IMR-90 (cell line): ENCODE measurements at regions of chr3 and their contacts with region 1.

Region 1: DNA sequence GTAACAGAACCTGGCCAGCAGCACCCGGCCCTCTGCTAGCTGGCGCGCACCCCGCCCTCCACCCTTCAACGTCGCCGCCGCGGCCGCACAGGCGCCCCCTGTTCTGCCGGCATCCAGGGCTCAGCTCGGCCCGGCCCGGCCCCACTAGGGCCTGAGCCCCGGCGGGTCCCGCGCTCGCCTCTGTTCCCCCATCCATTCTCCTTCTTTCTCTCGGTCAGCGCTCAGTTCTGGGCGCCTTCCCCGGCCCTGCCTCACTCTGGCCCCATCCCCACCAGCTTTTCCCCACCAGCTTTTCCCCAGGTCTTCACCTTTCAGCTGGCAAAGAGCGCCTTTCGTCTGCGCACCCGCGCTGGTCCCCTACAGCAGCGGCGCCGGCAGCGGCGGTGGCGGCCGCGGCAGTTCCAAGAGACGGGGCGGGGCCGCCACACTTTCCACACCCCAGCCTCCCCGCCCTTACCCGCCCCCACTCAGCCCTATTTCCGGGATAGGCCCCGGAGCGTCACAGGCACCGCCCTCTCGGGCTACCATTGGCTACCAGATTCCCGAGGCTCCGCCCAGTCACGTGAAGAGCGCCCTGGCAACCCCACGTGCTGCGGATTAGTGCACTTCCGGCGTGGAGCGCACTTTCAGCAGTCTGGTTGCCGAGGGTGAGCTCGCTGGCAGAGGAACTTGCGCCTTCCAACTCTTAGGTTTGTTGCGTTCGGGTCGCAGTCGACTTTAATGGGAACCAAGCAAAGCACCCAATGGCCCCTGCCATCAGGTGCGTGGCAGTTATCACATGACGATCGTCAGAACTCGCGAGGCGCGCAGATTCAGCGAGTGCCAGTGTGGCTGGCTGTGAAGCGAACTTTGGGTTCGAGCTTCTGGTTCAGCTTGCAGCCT is at the start of gene EIF5A2:
- DNase-seq: peak; percentile 93
- ATAC-seq: peak; percentile 96
- H3K4me3 ChIP-seq: peak within 1 kb of the TSS; percentile 80
- H3K27ac ChIP-seq: peak within 1 kb of the TSS; percentile 91
- H3K4me1 ChIP-seq: peaks cover 7% of the 10 kb centered on the region
- H3K27me3 ChIP-seq: no peaks in the 10 kb centered on the region
- CTCF ChIP-seq: no peak
- POLR2A ChIP-seq: peak; percentile 88
- RAD21 ChIP-seq: no peak
- total RNA-seq, gene EIF5A2: 7.7 and 15.0 TPM in 2 replicates

Region 2: DNA sequence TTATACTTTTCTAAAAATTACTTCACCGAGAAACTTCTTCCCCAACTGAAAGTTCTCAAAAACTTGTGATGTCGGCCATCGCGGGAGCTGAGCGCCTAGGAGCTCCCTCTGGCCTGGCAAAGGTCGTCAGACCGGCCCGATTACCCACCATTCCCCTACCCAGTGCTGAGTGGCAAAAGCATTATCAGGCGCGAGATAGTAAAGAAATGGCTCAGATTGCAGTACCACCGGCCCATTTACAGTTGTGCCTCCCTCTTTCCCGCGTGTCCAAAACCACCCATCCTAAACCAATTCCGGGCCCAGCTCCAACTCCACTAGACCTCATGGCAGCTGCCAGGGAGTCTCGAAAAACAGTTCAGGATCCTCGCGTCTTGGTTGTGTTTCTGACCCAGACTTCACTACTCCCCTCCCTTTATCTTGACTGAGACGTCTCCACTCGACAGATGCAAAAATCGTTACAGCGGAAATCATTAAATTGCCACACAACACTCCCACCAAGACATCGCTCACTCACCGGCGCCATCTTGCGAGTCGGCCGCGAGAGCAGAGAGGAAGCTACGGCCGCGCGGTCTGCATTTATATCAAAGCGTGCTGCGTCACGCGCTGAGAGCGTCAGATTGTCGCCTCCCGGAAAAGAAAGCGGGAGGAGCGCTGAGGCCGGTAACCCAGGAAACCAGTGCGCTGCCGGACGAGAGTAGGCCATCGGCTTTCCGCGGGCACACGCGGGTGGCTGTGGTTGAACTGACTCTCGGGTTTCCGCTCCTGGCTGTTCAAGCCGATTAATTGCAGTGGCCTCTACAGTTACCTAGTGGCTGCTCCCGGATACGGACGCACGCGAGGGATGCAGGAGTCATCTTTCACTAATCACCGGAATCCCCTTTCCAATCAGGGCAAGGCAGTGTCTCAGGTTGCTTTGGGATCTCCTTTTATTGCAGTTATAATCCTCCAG is 38.6 kb before region 1 on chr3 and contains the start of gene RPL22L1:
- CTCF ChIA-PET with region 1: no interaction called
- POLR2A ChIA-PET with region 1: no interaction called
- dilution Hi-C with region 1: no loop called
- in situ Hi-C with region 1: no loop called
- intact Hi-C with region 1: loop called (anchors 2 kb)
- DNase-seq: peak; percentile 95
- ATAC-seq: peak; percentile 96
- H3K4me3 ChIP-seq: peak within 1 kb of the TSS; percentile 75
- H3K27ac ChIP-seq: peak within 1 kb of the TSS; percentile 91
- H3K4me1 ChIP-seq: peaks cover 3% of the 10 kb centered on the region; the same call in 1 of the 2 replicates
- H3K27me3 ChIP-seq: no peaks in the 10 kb centered on the region
- CTCF ChIP-seq: 0 out of 2 replicates have a peak, but pooled peaks have one; percentile 19
- POLR2A ChIP-seq: peak; percentile 100
- RAD21 ChIP-seq: no peak
- total RNA-seq, gene RPL22L1: 37.1 and 77.8 TPM in 2 replicates